Activated T-helper 2 cell treated with anti-CD3 and anti-CD28 coated beads, Interferon-gamma antibody, Interleukin-2, Interleukin-4, amounts not matched to agents 10 μg/mL and 5 μg/mL and 100 μg/mL, durations not matched to agents 14 hours and 24 hours and 36 hours (primary cell): ENCODE measurements at regions of chr20 and their contacts with region 1.

Region 1: GRCh38 chr20:24992487-24993205 is at the start of gene APMAP:
- DNase-seq: peak; percentile 92
- H3K4me3 Mint-ChIP-seq: peak within 1 kb of the TSS; percentile 97
- H3K27ac Mint-ChIP-seq: peak within 1 kb of the TSS; percentile 85
- H3K4me1 Mint-ChIP-seq: peaks cover 55% of the 10 kb centered on the region
- H3K27me3 Mint-ChIP-seq: peaks cover 19% of the 10 kb centered on the region
- total RNA-seq, gene APMAP: 48.5 and 48.8 TPM in 2 replicates

Region 2: DNA sequence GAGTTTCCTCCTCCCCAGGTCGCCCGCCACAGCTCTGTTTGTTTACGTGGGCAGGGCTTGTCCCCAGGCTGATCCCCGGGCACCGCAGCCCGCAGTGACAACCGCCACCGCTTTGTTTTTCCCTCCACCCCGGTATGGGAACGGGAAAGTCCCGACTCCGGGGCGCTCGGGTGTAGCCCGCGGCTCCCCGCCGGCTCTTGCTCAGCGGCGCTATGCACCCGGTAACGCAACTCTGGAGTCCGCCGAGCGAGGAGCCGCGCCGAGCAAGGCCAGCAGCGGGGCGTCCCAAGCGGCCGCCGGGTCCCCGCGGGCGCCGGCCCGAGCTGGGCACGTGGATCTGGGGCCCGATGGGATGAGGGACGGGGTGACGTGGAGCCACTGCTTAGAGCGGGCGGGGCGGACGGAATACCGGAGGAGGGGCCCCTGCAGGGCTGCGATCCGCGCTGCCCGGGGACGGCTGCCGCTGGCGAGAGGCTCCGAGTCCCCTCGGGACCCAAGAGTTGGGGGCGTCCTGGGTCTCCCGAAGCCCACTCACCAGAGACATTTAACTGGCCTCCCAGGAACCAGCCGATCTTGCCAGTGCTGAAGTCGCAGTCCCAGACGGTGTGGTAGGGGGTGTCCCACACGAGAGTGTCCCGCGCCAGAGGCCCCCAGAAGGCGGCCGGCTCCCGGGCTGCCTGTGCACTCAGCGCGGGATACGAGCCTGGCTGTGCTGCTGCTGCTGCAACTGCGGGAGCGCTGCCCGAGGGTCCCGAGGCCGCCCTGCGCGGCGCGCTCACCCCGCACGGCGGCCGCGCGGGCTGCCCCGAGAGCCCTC is 64.8 kb after region 1 on chr20:
- intact Hi-C with region 1: loop called (anchors 1 kb)
- DNase-seq: peak; percentile 78
- H3K4me3 Mint-ChIP-seq: peak overlapping the region; percentile 76
- H3K27ac Mint-ChIP-seq: peak overlapping the region; percentile 64
- H3K4me1 Mint-ChIP-seq: peaks cover 30% of the 10 kb centered on the region
- H3K27me3 Mint-ChIP-seq: peaks cover 18% of the 10 kb centered on the region

Region 3: GRCh38 chr20:25178563-25179438 is 186.2 kb after region 1 on chr20:
- intact Hi-C with region 1: loop called (anchors 1 kb)
- DNase-seq: no peak
- H3K4me3 Mint-ChIP-seq: no peak overlapping the region
- H3K27ac Mint-ChIP-seq: no peak overlapping the region
- H3K4me1 Mint-ChIP-seq: peaks cover 3% of the 10 kb centered on the region
- H3K27me3 Mint-ChIP-seq: peaks cover 12% of the 10 kb centered on the region

Region 4: DNA sequence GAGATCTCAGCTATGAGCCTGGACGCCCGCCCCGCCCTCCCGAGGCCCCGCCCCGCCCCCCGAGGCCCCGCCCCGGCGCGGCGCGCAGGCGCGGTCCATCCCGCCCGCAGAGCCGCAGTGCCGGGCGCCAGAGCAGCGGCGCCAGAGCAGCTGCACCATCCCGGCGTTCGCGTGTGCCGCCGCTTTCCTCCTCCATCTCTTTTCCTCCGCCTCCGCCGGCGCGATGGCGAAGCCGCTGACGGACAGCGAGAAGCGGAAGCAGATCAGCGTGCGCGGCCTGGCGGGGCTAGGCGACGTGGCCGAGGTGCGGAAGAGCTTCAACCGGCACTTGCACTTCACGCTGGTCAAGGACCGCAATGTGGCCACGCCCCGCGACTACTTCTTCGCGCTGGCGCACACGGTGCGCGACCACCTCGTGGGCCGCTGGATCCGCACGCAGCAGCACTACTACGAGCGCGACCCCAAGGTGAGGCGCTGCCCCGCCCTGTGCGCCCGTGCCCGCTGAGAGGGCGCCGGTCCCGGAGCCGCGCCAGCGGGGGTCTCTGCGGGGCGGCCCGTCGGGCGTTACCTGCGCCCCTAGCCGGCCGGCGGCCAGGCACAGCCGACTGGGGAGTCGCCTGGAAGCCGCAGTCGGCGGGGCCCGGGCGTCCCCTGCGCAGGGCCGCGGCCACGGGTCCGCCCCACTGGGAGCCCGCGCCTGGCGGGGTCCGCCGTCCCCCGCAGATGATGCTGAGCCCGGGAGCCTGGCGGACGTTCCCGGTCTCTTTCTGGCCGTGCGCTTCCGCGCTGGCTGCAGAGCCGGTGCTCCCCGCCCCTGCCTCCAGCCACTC is 255.5 kb after region 1 on chr20 and contains the start of gene PYGB:
- intact Hi-C with region 1: loop called (anchors 5 kb)
- DNase-seq: peak; percentile 69
- H3K4me3 Mint-ChIP-seq: peak within 1 kb of the TSS; percentile 93
- H3K27ac Mint-ChIP-seq: peak within 1 kb of the TSS; percentile 82
- H3K4me1 Mint-ChIP-seq: peaks cover 35% of the 10 kb centered on the region
- H3K27me3 Mint-ChIP-seq: peaks cover 5% of the 10 kb centered on the region
- total RNA-seq, gene PYGB: 34.5 and 37.1 TPM in 2 replicates

Region 5: DNA sequence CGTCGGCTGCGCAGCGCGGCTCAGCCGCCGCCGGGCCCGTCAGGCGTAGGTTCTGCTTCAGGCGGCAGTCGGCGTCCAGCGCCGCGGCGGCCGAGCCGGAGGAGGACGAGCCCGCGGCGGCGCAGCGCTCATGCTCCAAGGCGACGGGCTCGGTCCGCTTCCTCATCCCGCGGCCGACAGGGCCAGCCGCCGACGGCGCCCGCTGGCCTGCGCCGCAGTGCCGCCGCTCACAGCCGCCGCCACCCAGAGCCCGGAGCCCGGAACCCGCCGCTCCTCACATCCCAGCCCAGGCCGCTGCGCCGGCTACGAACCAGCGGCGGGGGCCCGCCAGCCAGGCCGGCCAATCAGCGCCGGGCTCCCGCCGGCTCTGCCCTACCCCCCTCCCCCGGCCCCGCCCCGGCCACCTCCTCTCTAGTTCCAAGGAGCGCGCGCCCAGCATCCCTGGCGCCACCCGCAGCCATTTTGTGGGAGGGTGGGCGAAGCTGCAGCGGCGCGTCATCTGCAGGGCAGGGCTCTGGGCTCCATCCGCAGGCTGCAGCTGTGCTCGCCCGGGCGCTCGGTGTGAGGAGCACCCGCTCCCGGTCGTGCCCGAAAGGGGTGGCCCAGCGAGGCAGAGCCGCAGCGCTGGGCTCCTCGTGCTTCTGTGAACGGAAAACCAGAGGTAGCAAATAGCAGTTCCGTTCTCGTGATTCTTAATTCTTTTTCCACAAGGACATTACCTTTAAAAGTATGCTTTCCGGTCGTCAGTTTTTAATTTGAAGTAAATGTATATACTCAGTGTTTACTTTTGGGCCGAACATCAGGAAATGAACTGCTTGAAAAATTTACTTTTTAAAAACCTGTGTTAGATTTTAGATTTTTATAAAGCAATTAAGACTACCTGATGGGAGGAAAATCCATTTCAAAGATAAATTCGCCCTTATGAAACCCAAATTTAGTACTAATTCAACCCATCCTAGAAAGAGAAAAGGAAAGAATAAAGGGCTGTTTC is 398.2 kb after region 1 on chr20 and contains the start of gene ABHD12:
- intact Hi-C with region 1: loop called (anchors 1 kb)
- DNase-seq: peak; percentile 94
- H3K4me3 Mint-ChIP-seq: peak within 1 kb of the TSS; percentile 86
- H3K27ac Mint-ChIP-seq: peak within 1 kb of the TSS; percentile 90
- H3K4me1 Mint-ChIP-seq: peaks cover 11% of the 10 kb centered on the region
- H3K27me3 Mint-ChIP-seq: no peaks in the 10 kb centered on the region
- total RNA-seq, gene ABHD12: 29.0 and 29.5 TPM in 2 replicates

Region 6: GRCh38 chr20:25623736-25624499 is 631.3 kb after region 1 on chr20 and contains the start of gene NANP:
- intact Hi-C with region 1: loop called (anchors 5 kb)
- DNase-seq: peak; percentile 89
- H3K4me3 Mint-ChIP-seq: peak within 1 kb of the TSS; percentile 89
- H3K27ac Mint-ChIP-seq: peak within 1 kb of the TSS; percentile 95
- H3K4me1 Mint-ChIP-seq: peaks cover 26% of the 10 kb centered on the region
- H3K27me3 Mint-ChIP-seq: no peaks in the 10 kb centered on the region
- total RNA-seq, gene NANP: 7.9 and 9.1 TPM in 2 replicates